ENCODE measurements at regions of chr16 and their contacts with region 1.

Region 1: GRCh38 chr16:56708525-56709442 is 21.1 kb upstream of the NUP93 start:
- DNase-seq: no peak
- H3K4me3 ChIP-seq: no peak overlapping the region
- H3K27ac ChIP-seq: no peak overlapping the region
- H3K4me1 ChIP-seq: no peaks in the 10 kb centered on the region
- H3K27me3 ChIP-seq: no peaks in the 10 kb centered on the region
- CTCF ChIP-seq: no peak
- POLR2A ChIP-seq: no peak

Region 2: GRCh38 chr16:56589141-56590039 is 119.4 kb before region 1 on chr16 and contains the start of gene MT3:
- intact Hi-C with region 1: loop called (anchors 10 kb)
- DNase-seq: peak; percentile 39
- H3K4me3 ChIP-seq: peak within 1 kb of the TSS; percentile 32 to 51
- H3K27ac ChIP-seq: no peak within 1 kb of the TSS
- H3K4me1 ChIP-seq: peaks cover 9% of the 10 kb centered on the region
- H3K27me3 ChIP-seq: no peaks in the 10 kb centered on the region
- CTCF ChIP-seq: no peak
- POLR2A ChIP-seq: no peak
- total RNA-seq, gene MT3: 4.6 TPM in 1 of 2 donors, not detected in the other

Region 3: GRCh38 chr16:56950881-56951771 is 242.3 kb after region 1 on chr16:
- intact Hi-C with region 1: no loop called
- DNase-seq: peak; percentile 44
- H3K4me3 ChIP-seq: no peak overlapping the region
- H3K27ac ChIP-seq: no peak overlapping the region
- H3K4me1 ChIP-seq: no peaks in the 10 kb centered on the region
- H3K27me3 ChIP-seq: no peaks in the 10 kb centered on the region
- CTCF ChIP-seq: peak in 1 of 3 experiments; percentile 32
- POLR2A ChIP-seq: no peak

Measured in testis (tissue), 5 donors.